ENCODE measurements at regions of chr11 and their contacts with region 1.

Region 1: DNA sequence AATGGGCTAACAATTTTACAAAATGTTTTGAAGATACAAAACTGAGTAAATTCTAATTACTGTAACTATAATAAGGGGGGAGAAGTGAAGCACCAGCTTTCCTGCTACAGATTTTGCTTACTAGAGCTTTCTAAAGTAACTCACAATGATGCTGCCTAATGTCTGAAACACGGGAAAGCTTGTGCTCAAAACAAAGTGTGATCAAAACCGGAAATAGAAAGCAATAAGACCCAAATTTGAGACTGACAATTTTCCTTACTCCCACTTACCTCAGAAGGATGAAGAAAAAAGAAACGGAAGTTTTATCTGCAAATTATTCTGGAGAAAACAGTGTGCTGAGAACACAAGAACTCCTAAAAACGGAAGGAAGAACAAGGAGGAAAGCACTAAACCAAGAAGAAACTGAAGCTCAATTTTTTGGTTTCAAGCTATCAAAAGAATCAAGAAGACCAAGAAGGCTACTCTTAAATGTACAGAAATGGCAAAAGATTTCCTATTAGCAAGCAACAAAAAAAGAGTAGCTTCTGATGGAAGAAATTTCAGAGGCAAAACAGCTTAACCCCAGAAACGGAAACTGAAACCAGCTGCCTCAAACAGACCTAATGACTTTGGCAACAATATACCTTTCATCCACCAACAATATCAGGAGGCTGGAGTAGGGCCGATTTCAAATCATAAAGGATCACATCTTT is 33.4 kb downstream of the AMBRA1 start:
- DNase-seq: peak in 1 of 5 donors; percentile 27
- H3K4me3 ChIP-seq: peak overlapping the region; percentile 72
- H3K4me3 Mint-ChIP-seq: peak overlapping the region; percentile 85 to 96 (median 88)
- H3K27ac ChIP-seq: peak overlapping the region; percentile 77
- H3K27ac Mint-ChIP-seq: peak overlapping the region; percentile 63 to 98 (median 94)
- H3K4me1 ChIP-seq: peaks cover 35% of the 10 kb centered on the region
- H3K4me1 Mint-ChIP-seq: peaks cover 55 to 76% (median 73%) of the 10 kb centered on the region in 3 donors
- H3K27me3 ChIP-seq: no peaks in the 10 kb centered on the region
- H3K27me3 Mint-ChIP-seq: no peaks in the 10 kb centered on the region

Region 2: DNA sequence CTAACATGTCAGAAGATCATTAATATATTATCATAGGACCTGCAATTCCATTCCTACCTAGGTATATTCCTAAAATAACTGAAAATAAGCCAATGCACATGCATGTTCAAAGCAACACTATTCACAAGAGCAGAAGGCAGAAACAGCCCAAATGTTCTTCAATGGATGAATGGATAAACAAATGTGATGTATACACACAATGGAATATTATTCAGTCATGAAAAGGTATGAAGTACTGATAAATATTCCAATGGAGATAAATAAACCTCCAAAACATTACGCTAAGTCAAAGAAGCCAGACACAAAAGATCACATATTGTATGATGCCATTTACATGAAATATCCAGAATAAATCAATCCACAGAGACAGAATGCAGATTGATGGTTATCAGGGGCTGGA is 16.6 kb after region 1 on chr11:
- CTCF ChIA-PET with region 1: no interaction called
- POLR2A ChIA-PET with region 1: no interaction called
- DNase-seq: no peak
- H3K4me3 ChIP-seq: no peak overlapping the region
- H3K4me3 Mint-ChIP-seq: no peak overlapping the region
- H3K27ac ChIP-seq: no peak overlapping the region
- H3K27ac Mint-ChIP-seq: no peak overlapping the region
- H3K4me1 ChIP-seq: no peaks in the 10 kb centered on the region
- H3K4me1 Mint-ChIP-seq: peaks cover 36 to 57% (median 56%) of the 10 kb centered on the region in 3 donors
- H3K27me3 ChIP-seq: no peaks in the 10 kb centered on the region
- H3K27me3 Mint-ChIP-seq: no peaks in the 10 kb centered on the region

Region 3: DNA sequence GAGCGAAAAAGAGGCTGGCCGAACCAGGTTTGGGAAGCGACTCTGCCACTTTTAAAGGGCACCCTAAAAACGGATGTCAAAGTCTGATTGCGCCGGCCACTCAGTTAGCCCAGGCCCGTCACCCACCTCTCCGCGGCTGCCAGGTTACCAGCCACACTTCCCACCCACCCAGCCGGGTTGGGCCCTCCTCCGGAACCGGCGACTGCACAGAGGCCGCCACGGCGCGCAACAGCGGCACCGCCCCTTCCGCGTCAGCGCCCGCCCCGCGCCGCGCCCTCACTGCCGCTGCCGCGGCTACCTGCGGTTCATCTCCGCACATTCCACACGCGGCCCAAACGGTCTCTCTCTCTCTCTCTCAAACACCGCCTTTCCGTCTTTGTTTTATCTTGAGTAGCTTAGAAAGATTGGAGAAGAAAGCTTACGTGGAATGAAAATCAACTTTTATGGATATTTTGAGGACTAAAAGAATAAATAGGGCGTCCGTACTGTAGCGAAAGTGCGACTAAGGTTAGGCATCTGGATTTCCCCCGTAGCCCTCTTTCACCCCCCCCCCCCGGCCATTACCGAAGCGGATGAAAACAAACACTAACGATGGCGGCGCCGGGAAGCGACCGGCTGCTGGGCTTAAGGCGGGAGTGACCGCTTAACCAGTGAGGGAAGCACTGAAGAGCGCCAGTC is 56.7 kb after region 1 on chr11 and contains the starts of genes ATG13 and HARBI1:
- CTCF ChIA-PET with region 1: interaction called, 12 read pairs
- POLR2A ChIA-PET with region 1: interaction called, 13 read pairs
- DNase-seq: peak; percentile 89 to 94 (median 93)
- H3K4me3 ChIP-seq: peak within 1 kb of the TSS; percentile 85
- H3K4me3 Mint-ChIP-seq: peak within 1 kb of the TSS; percentile 90 to 99 (median 98)
- H3K27ac ChIP-seq: peak within 1 kb of the TSS; percentile 99
- H3K27ac Mint-ChIP-seq: peak within 1 kb of the TSS; percentile 98 to 100 (median 100)
- H3K4me1 ChIP-seq: peaks cover 33% of the 10 kb centered on the region
- H3K4me1 Mint-ChIP-seq: peaks cover 37 to 62% (median 48%) of the 10 kb centered on the region in 3 donors
- H3K27me3 ChIP-seq: no peaks in the 10 kb centered on the region
- H3K27me3 Mint-ChIP-seq: peaks cover 0 to 4% of the 10 kb centered on the region in 2 donors
- total RNA-seq, gene ATG13: 67.9 to 69.6 TPM
- total RNA-seq, gene HARBI1: 4.6 to 5.3 TPM